WTC11 (cell line): ENCODE measurements at regions of chr6 and their contacts with region 1.

Region 1: GRCh38 chr6:161242779-161243693 is 30.8 kb downstream of the AGPAT4 start:
- DNase-seq: peak; percentile 64
- ATAC-seq: peak; percentile 93
- H3K4me3 Mint-ChIP-seq: no peak overlapping the region
- H3K27ac Mint-ChIP-seq: 0 out of 2 replicates have a peak overlapping the region, but pooled peaks have one; percentile 75
- H3K4me1 Mint-ChIP-seq: peaks cover 47% of the 10 kb centered on the region
- H3K27me3 Mint-ChIP-seq: no peaks in the 10 kb centered on the region
- CTCF ChIP-seq: no peak

Region 2: GRCh38 chr6:161254464-161255253 is 11.6 kb after region 1 on chr6:
- CTCF ChIA-PET with region 1: interaction called, 11 read pairs
- POLR2A ChIA-PET with region 1: no interaction called
- DNase-seq: no peak
- ATAC-seq: peak; percentile 35
- H3K4me3 Mint-ChIP-seq: no peak overlapping the region
- H3K27ac Mint-ChIP-seq: peak overlapping the region; percentile 60
- H3K4me1 Mint-ChIP-seq: peaks cover 36% of the 10 kb centered on the region
- H3K27me3 Mint-ChIP-seq: no peaks in the 10 kb centered on the region
- CTCF ChIP-seq: no peak

Region 3: DNA sequence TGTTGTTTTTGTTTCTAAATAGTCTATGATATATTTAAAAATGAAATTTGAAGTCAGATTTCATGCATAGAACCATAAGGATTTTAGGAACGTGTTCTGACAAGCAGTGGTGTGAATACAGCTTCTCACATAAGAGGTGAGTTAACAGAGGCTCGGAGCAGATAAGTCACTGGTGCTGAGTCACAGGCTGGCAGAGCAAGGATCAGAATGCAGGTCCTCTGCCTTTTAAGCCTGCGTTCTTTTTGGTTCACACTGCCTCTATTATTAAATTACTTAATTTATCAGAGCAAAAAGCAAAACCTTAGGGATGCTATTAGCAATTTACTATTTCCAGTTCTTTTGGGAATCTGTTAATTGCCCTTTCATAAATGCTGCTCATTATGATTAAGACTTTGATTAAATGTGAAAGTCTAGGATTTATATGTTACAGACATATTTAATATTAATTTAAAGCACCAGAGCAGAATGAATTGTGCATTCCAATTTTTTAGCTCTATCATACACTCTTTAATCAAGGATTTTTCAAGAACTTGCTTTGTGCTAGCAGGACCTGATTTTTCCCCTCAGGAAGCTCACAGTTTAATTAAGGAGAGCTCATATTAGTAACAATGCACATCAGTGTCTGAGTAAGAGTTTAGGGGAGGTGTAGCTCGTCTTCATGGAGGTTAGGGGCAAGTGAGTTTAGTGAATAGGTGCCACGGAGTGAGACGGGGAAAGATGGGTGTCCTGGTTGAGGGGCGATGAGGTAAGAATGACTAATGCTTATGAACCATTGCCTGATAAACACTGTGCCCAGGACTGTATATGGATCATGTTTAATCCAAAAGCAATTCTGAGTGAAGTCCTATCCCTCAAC is 243.6 kb after region 1 on chr6:
- CTCF ChIA-PET with region 1: no interaction called
- POLR2A ChIA-PET with region 1: no interaction called
- DNase-seq: no peak
- ATAC-seq: no peak
- H3K4me3 Mint-ChIP-seq: no peak overlapping the region
- H3K27ac Mint-ChIP-seq: no peak overlapping the region
- H3K4me1 Mint-ChIP-seq: peaks cover 15% of the 10 kb centered on the region
- H3K27me3 Mint-ChIP-seq: no peaks in the 10 kb centered on the region; the same call in 1 of the 2 replicates
- CTCF ChIP-seq: no peak